HEK293T (cell line): ENCODE measurements at regions of chr2 and their contacts with region 1.

Region 1: GRCh38 chr2:110677530-110678456 is at the start of gene BUB1:
- DNase-seq: peak; percentile 98

Region 2: GRCh38 chr2:110667071-110667470 is 10.7 kb before region 1 on chr2:
- CTCF ChIA-PET with region 1: interaction called, 3 read pairs
- POLR2A ChIA-PET with region 1: interaction called, 16 read pairs
- DNase-seq: no peak

Region 3: DNA sequence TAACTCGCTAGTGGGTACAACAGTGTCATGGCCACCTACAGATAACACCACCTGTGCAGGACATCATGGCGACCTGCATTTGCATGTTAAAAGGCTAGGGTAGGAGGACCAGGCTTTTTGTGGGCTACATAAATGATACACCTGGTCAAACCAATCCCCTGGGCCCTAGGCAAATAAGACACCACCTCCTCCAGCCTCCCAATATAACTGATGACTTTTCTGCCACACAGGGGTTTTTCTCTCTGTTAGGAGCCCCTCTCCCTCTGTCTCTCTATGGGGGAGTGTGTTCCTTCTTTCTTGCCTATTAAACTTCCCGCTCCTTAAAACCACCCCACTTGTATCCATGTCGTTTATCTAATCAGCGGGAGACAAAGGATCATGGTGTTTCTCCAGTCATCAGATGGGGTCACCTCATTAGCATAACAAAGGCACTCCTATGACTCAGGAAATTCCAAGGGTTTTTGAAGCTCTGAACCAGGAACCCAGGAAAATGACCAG is 10.8 kb after region 1 on chr2:
- CTCF ChIA-PET with region 1: interaction called, 3 read pairs
- POLR2A ChIA-PET with region 1: interaction called, 25 read pairs
- DNase-seq: no peak

Region 4: DNA sequence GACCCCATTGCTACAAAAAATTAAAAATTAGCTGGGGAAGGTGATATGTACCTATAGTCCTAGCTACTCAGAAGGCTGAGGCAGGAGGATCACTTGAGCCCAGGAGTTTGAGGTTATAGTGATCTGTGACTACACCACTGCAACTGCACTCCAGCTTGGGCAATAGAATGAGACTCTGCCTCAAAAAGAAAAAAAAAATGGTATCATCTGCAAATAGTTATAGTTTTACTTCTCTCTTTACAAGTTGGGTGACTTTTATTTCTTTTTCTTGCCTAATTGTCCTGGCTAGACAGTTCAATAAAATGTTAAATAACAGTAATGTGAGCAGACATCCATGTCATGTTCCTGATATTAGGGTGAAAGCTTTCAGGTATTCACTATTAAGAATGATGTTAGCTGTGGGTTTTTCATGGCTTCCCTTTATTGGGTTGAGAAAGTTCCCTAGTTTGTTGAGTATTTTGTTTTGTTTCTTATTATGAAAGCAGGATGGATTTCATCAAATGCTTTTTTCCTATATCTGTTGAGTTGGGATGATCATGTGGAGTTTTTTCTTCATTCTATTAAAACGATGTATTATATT is 29.7 kb after region 1 on chr2:
- CTCF ChIA-PET with region 1: no interaction called
- POLR2A ChIA-PET with region 1: no interaction called
- DNase-seq: no peak

Region 5: DNA sequence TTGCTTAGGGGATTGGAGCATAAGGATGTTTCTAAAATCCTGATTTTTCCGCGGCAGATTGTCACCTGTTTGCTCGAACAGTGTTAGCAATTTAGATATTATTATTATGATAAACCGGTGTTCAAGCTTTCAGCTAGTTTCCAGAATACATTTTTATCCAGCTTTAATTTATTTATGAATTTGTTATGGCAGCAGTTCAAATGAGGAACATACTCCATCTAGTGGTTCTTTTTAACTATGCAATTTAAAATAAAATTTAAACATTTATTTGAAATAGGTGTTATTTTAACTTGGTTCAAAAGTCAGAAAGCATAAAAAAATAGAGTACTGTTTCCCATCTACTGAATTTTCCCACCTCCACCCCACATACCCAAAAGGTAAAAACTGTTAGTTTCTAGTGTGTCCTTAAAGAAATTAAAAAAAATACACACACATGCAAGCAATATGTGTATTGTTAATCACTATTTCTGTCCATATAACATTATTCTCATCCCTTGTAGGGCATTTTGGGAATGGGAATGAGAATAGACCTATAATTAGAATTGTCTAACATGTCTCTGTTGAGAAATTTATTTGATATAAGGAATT is 77.8 kb after region 1 on chr2:
- CTCF ChIA-PET with region 1: interaction called, 5 read pairs
- POLR2A ChIA-PET with region 1: interaction called, 11 read pairs
- DNase-seq: no peak

Region 6: GRCh38 chr2:110796787-110797186 is 119.0 kb after region 1 on chr2:
- CTCF ChIA-PET with region 1: no interaction called
- POLR2A ChIA-PET with region 1: no interaction called
- DNase-seq: no peak